ENCODE measurements at regions of chr6 and their contacts with region 1.

Region 1: DNA sequence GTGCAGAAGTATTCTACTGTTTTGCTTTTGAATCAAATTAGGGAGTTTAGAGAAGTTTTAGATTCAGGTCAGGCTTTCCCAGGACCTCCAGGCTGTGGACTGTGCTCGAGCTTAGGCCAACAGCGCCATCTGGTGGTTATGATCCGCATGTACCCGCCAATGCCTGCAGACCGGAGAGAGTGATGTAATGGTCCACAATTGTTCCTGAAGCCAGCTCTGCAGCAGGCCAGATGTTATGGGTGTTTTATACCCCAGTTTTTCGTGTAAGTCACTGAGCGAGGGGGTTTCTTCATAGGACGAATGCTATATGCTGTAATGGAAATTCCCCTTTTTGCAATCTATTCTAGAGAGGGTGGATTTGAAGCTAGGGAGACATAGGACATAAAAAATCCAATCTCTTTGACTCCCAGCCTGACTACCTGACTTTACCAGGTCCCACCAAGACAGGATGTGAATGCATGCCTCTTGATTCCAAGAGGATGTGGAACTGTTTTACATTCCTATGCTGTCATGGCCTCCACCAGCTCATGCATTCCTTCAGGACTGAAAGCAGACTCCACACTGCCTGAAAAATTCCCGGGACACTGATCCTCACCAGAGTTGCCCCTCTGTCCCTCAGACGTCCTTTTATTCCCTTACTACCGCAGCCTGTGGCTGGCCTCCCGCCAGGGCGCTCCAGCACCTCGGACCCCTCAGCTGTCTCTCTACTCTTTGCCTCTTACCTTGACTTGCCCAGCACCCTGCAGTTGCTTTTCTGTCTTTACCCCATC is 41.2 kb upstream of the LY86 start:
- DNase-seq: peak; percentile 71
- H3K4me3 ChIP-seq: peak overlapping the region; percentile 37 to 44 (median 43)
- H3K27ac ChIP-seq: no peak overlapping the region
- H3K4me1 ChIP-seq: peaks cover 12% of the 10 kb centered on the region
- H3K27me3 ChIP-seq: no peaks in the 10 kb centered on the region
- CTCF ChIP-seq: peak; percentile 87 to 94

Region 2: GRCh38 chr6:5471044-5471443 is 1076.3 kb before region 1 on chr6:
- CTCF ChIA-PET with region 1: no interaction called
- dilution Hi-C with region 1: no loop called
- in situ Hi-C with region 1: no loop called
- intact Hi-C with region 1: loop called (anchors 1 kb)
- DNase-seq: peak; percentile 22
- H3K4me3 ChIP-seq: no peak overlapping the region
- H3K27ac ChIP-seq: no peak overlapping the region
- H3K4me1 ChIP-seq: no peaks in the 10 kb centered on the region
- H3K27me3 ChIP-seq: no peaks in the 10 kb centered on the region
- CTCF ChIP-seq: peak; percentile 85 to 90

Region 3: GRCh38 chr6:5937169-5937909 is 610.0 kb before region 1 on chr6:
- CTCF ChIA-PET with region 1: no interaction called
- dilution Hi-C with region 1: no loop called
- in situ Hi-C with region 1: no loop called
- intact Hi-C with region 1: no loop called
- DNase-seq: no peak
- H3K4me3 ChIP-seq: no peak overlapping the region
- H3K27ac ChIP-seq: no peak overlapping the region
- H3K4me1 ChIP-seq: peaks cover 12% of the 10 kb centered on the region
- H3K27me3 ChIP-seq: no peaks in the 10 kb centered on the region
- CTCF ChIP-seq: no peak

Region 4: DNA sequence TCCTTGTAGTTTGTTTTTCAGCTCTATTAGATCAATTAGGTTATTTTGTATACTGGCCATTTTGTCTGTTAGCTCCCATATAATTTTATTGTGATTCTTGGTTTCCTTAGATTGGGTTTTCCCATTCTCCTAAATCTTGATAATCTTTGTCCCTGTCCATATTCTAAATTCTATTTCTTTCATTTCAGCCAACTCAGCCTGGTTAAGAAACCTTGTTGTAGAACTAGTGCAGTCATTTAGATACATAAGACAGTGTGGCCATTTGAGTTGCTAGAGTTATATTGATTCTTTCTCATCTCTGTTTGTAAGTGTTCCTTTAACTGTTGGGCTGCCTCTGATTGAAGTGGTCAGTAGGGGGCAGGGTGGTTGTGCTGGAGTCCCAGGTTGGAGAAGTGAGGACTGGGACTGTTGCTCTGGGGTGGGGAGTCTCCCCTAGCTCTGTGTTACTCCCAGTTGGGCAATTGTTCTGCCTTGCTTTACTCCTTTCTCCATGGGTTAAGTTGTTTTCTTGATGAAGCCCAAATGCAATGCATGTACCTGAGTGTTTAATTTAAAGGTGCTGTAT is 441.7 kb before region 1 on chr6:
- CTCF ChIA-PET with region 1: no interaction called
- dilution Hi-C with region 1: no loop called
- in situ Hi-C with region 1: no loop called
- intact Hi-C with region 1: loop called (anchors 1 kb)
- DNase-seq: no peak
- H3K4me3 ChIP-seq: no peak overlapping the region
- H3K27ac ChIP-seq: no peak overlapping the region
- H3K4me1 ChIP-seq: no peaks in the 10 kb centered on the region
- H3K27me3 ChIP-seq: no peaks in the 10 kb centered on the region
- CTCF ChIP-seq: peak; percentile 15 to 45

Region 5: GRCh38 chr6:6315660-6316059 is 231.6 kb before region 1 on chr6:
- CTCF ChIA-PET with region 1: no interaction called
- dilution Hi-C with region 1: no loop called
- in situ Hi-C with region 1: no loop called
- intact Hi-C with region 1: loop called (anchors 5 kb)
- DNase-seq: peak; percentile 20
- H3K4me3 ChIP-seq: no peak overlapping the region
- H3K27ac ChIP-seq: no peak overlapping the region
- H3K4me1 ChIP-seq: peaks cover 3% of the 10 kb centered on the region
- H3K27me3 ChIP-seq: peaks cover 17% of the 10 kb centered on the region
- CTCF ChIP-seq: peak; percentile 72 to 86

Region 6: DNA sequence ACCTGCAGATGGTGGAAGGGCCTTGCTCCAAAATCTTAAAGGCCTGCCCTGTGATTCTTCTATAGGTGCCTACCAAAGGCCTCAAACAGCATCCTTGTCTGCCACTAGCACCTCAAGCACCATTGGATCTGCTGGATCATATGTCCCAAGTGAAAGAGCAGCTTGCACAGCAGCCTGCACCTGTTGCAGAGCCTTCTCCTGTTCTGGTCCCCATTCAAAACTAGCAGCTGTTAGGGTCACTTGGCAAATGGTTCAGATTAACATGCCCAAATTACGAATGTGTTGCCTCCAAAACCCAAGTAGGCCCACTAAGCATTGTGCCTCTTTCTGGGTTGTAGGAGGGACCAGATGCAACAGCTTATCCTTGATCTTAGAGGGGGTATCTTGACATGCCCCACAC is 127.2 kb before region 1 on chr6:
- CTCF ChIA-PET with region 1: no interaction called
- dilution Hi-C with region 1: no loop called
- in situ Hi-C with region 1: no loop called
- intact Hi-C with region 1: no loop called
- DNase-seq: no peak
- H3K4me3 ChIP-seq: no peak overlapping the region
- H3K27ac ChIP-seq: no peak overlapping the region
- H3K4me1 ChIP-seq: peaks cover 3% of the 10 kb centered on the region
- H3K27me3 ChIP-seq: no peaks in the 10 kb centered on the region
- CTCF ChIP-seq: no peak

Region 7: DNA sequence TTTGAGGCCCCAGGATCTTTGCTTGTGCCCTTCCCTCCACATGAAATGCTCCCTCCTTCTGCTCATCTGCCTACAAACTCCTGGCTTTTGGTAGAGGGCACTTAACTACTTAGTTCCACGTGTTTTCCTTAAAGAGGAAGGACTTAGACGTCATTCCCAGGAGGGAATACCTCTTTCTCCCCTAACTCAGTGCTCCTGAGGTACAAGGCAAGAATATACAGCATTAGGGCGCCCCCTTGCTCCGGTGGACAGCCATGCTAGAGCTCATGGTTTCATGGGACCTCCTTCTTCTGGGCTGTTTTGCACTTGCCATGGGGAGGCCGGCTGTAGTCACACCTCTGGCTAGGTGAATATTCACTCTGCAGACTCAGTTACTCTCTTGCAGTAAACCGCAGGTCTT is 52.6 kb before region 1 on chr6:
- CTCF ChIA-PET with region 1: interaction called, 3 read pairs
- dilution Hi-C with region 1: no loop called
- in situ Hi-C with region 1: no loop called
- intact Hi-C with region 1: loop called (anchors 1 kb)
- DNase-seq: peak; percentile 39
- H3K4me3 ChIP-seq: no peak overlapping the region
- H3K27ac ChIP-seq: no peak overlapping the region
- H3K4me1 ChIP-seq: no peaks in the 10 kb centered on the region
- H3K27me3 ChIP-seq: no peaks in the 10 kb centered on the region
- CTCF ChIP-seq: peak; percentile 62 to 75

Region 8: GRCh38 chr6:6969761-6970223 is 422.5 kb after region 1 on chr6:
- CTCF ChIA-PET with region 1: no interaction called
- dilution Hi-C with region 1: no loop called
- in situ Hi-C with region 1: no loop called
- intact Hi-C with region 1: no loop called
- DNase-seq: peak; percentile 89
- H3K4me3 ChIP-seq: no peak overlapping the region
- H3K27ac ChIP-seq: peak overlapping the region; percentile 3
- H3K4me1 ChIP-seq: peaks cover 23% of the 10 kb centered on the region
- H3K27me3 ChIP-seq: no peaks in the 10 kb centered on the region
- CTCF ChIP-seq: no peak

Measured in mammary epithelial cell (primary cell).